PC-9 (cell line): ENCODE measurements at regions of chr2 and their contacts with region 1.

Region 1: GRCh38 chr2:216114714-216115557 is 5.8 kb downstream of the XRCC5 start:
- DNase-seq: peak; percentile 96 to 98
- H3K4me3 ChIP-seq: peak overlapping the region; percentile 76
- H3K27ac ChIP-seq: peak overlapping the region; percentile 81
- H3K4me1 ChIP-seq: peaks cover 19% of the 10 kb centered on the region
- H3K27me3 ChIP-seq: no peaks in the 10 kb centered on the region
- CTCF ChIP-seq: peak; percentile 99

Region 2: DNA sequence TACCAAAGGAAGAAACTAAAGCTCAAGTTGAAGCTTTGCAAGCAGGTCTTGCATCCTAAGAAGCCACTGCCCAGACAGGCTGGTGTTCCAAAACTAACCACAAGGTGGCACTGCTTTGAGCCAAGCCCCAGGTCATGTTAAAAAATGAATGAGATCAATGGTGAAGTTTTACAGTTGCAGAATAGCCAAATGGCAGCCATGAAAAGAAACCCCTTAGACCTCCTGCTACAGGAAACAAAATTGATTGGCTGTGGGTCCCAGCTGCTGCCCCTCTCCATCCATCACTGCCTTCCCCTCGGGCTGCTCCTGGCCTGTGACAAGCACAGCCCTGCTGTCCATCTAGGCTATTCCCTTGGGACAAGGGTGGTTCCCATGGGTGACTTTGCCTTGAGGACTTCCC is 80.9 kb before region 1 on chr2:
- CTCF ChIA-PET with region 1: no interaction called
- POLR2A ChIA-PET with region 1: no interaction called
- intact Hi-C with region 1: loop called (anchors 5 kb)
- DNase-seq: peak; percentile 55 to 68
- H3K4me3 ChIP-seq: no peak overlapping the region
- H3K27ac ChIP-seq: no peak overlapping the region
- H3K4me1 ChIP-seq: no peaks in the 10 kb centered on the region
- H3K27me3 ChIP-seq: no peaks in the 10 kb centered on the region
- CTCF ChIP-seq: peak; percentile 93

Region 3: GRCh38 chr2:216159144-216159543 is 44.2 kb after region 1 on chr2:
- CTCF ChIA-PET with region 1: no interaction called
- POLR2A ChIA-PET with region 1: no interaction called
- intact Hi-C with region 1: loop called (anchors 5 kb)
- DNase-seq: no peak
- H3K4me3 ChIP-seq: no peak overlapping the region
- H3K27ac ChIP-seq: no peak overlapping the region
- H3K4me1 ChIP-seq: no peaks in the 10 kb centered on the region
- H3K27me3 ChIP-seq: no peaks in the 10 kb centered on the region
- CTCF ChIP-seq: no peak

Region 4: GRCh38 chr2:216698895-216699294 is 584.0 kb after region 1 on chr2:
- CTCF ChIA-PET with region 1: no interaction called
- POLR2A ChIA-PET with region 1: no interaction called
- intact Hi-C with region 1: no loop called
- DNase-seq: no peak
- H3K4me3 ChIP-seq: no peak overlapping the region
- H3K27ac ChIP-seq: no peak overlapping the region
- H3K4me1 ChIP-seq: 0 out of 2 replicates have a peak, but pooled peaks cover 3% of the 10 kb centered on the region
- H3K27me3 ChIP-seq: no peaks in the 10 kb centered on the region
- CTCF ChIP-seq: peak; percentile 67